ENCODE measurements at regions of chr6 and their contacts with region 1.

Region 1: DNA sequence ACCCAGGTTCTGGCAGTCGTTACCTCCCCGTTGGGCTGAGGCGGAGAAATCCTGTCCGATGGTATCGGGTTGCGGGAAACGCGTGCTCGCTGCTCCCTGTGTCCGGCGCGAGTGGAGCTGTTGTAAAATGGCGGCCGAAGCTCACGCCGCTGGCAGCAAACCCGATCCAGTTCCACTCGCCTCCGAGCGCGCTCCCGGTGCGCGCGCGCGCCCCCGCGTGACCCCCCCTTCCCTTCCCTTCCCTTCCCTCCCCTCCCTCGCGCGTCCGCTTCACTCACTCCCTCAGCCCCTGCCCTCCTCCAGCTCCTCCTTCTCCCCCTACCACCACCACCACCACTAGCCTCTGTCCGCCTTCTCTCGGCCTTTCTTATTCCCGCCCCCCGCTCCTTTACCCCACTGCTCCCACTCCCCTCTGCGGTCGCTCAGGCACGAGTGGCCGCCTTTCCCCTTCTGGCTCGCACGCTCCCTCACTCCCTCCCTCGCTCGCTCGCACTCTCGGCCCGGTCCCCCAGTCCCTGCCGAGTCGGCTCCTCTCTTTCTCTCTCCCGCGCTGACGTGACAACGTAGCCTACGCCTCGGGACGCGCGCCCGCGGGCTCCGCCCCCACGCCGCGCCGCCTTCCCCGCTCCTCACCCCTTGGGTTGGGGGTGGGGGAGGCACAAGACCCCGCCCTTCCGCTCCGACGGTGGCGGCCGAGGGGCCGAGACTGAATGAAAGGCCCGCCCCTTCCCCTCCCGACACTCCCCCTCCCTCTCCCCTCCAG is at the start of gene SYNCRIP:
- DNase-seq: peak; percentile 95 to 99 (median 98)
- ATAC-seq: peak; percentile 81
- H3K4me3 ChIP-seq: peak within 1 kb of the TSS; percentile 98 to 100
- H3K4me3 Mint-ChIP-seq: peak within 1 kb of the TSS; percentile 91
- H3K27ac ChIP-seq: peak within 1 kb of the TSS; percentile 98
- H3K27ac Mint-ChIP-seq: peak within 1 kb of the TSS; percentile 96
- H3K4me1 ChIP-seq: peaks cover 38% of the 10 kb centered on the region
- H3K4me1 Mint-ChIP-seq: peaks cover 46% of the 10 kb centered on the region
- H3K27me3 ChIP-seq: no peaks in the 10 kb centered on the region
- H3K27me3 Mint-ChIP-seq: no peaks in the 10 kb centered on the region
- CTCF ChIP-seq: no peak
- total RNA-seq, gene SYNCRIP: 64.0 to 64.3 TPM

Region 2: GRCh38 chr6:85449818-85450759 is 192.9 kb before region 1 on chr6 and contains the start of gene NT5E:
- CTCF ChIA-PET with region 1: no interaction called
- POLR2A ChIA-PET with region 1: interaction called, 11 read pairs
- intact Hi-C with region 1: loop called in 1 of 2 experiments (anchors 2 kb)
- DNase-seq: peak; percentile 19 to 78 (median 61)
- ATAC-seq: peak; percentile 58
- H3K4me3 ChIP-seq: peak within 1 kb of the TSS; percentile 64 to 65
- H3K4me3 Mint-ChIP-seq: peak within 1 kb of the TSS; percentile 98
- H3K27ac ChIP-seq: peak within 1 kb of the TSS; percentile 40 to 71
- H3K27ac Mint-ChIP-seq: peak within 1 kb of the TSS; percentile 97
- H3K4me1 ChIP-seq: peaks cover 44% of the 10 kb centered on the region
- H3K4me1 Mint-ChIP-seq: peaks cover 62% of the 10 kb centered on the region
- H3K27me3 ChIP-seq: peaks cover 0 to 6% of the 10 kb centered on the region in 2 experiments
- H3K27me3 Mint-ChIP-seq: no peaks in the 10 kb centered on the region
- CTCF ChIP-seq: no peak
- total RNA-seq, gene NT5E: 12.7 to 13.0 TPM

Region 3: DNA sequence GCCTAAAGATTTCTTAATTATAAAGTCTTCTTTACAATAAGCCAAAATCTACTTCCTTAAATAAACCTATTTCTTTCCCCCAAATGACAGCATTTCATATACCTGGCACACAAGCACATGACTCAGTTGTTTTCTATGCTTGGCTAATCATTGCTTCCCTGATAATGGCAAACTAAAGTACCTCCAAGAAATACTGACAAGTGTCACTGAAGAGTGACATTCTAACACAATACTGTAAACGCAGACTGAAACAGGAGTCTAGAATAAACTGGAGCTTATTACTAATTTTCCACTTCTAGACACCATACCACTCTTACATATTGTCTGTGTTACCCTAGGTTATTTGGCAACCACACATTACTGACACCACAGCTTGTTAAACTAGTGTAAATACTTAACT is 14.6 kb before region 1 on chr6:
- CTCF ChIA-PET with region 1: no interaction called
- POLR2A ChIA-PET with region 1: interaction called, 7 read pairs
- intact Hi-C with region 1: loop called in 1 of 2 experiments (anchors 2 kb)
- DNase-seq: no peak
- ATAC-seq: no peak
- H3K4me3 ChIP-seq: no peak overlapping the region
- H3K4me3 Mint-ChIP-seq: no peak overlapping the region
- H3K27ac ChIP-seq: no peak overlapping the region
- H3K27ac Mint-ChIP-seq: no peak overlapping the region
- H3K4me1 ChIP-seq: peaks cover 15% of the 10 kb centered on the region
- H3K4me1 Mint-ChIP-seq: peaks cover 72% of the 10 kb centered on the region
- H3K27me3 ChIP-seq: no peaks in the 10 kb centered on the region
- H3K27me3 Mint-ChIP-seq: no peaks in the 10 kb centered on the region
- CTCF ChIP-seq: no peak

Region 4: GRCh38 chr6:85669735-85670194 is 26.8 kb after region 1 on chr6:
- CTCF ChIA-PET with region 1: interaction called, 14 read pairs
- POLR2A ChIA-PET with region 1: interaction called, 475 read pairs
- intact Hi-C with region 1: no loop called
- DNase-seq: peak; percentile 2 to 83 (median 35)
- ATAC-seq: peak; percentile 92
- H3K4me3 ChIP-seq: no peak overlapping the region
- H3K4me3 Mint-ChIP-seq: peak overlapping the region; percentile 57
- H3K27ac ChIP-seq: peak overlapping the region in 1 of 2 experiments; percentile 77
- H3K27ac Mint-ChIP-seq: peak overlapping the region; percentile 93
- H3K4me1 ChIP-seq: peaks cover 35% of the 10 kb centered on the region
- H3K4me1 Mint-ChIP-seq: peaks cover 58% of the 10 kb centered on the region
- H3K27me3 ChIP-seq: no peaks in the 10 kb centered on the region
- H3K27me3 Mint-ChIP-seq: no peaks in the 10 kb centered on the region
- CTCF ChIP-seq: no peak

Region 5: DNA sequence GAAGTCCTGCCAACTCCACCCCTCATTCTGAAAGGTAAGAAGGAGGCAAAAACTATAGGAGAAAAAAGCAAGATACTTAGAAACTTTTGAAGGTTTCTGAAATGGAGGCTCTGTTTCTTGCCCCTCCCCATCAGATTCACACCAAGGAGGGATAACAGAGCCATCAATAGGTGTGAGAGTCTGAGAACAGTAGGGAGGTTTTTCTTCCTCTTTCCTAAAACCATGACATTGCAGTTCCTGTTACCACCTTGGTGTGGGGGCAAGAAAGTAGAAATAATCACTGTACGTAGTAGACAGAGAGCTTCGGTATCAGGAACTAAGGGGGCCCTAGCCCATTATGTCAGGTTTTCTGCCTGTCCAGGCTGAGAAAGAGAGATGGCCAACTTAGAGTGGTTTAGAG is 333.0 kb after region 1 on chr6:
- CTCF ChIA-PET with region 1: no interaction called
- POLR2A ChIA-PET with region 1: no interaction called
- intact Hi-C with region 1: no loop called
- DNase-seq: no peak
- ATAC-seq: no peak
- H3K4me3 ChIP-seq: no peak overlapping the region
- H3K4me3 Mint-ChIP-seq: no peak overlapping the region
- H3K27ac ChIP-seq: no peak overlapping the region
- H3K27ac Mint-ChIP-seq: no peak overlapping the region
- H3K4me1 ChIP-seq: no peaks in the 10 kb centered on the region
- H3K4me1 Mint-ChIP-seq: no peaks in the 10 kb centered on the region
- H3K27me3 ChIP-seq: no peaks in the 10 kb centered on the region
- H3K27me3 Mint-ChIP-seq: no peaks in the 10 kb centered on the region
- CTCF ChIP-seq: no peak

Measured in CD8-positive, alpha-beta T cell (primary cell).